ENCODE measurements at regions of chr19 and their contacts with region 1.

Region 1: GRCh38 chr19:40702337-40703012 is 12.0 kb upstream of the NUMBL start:
- DNase-seq: peak; percentile 82 to 84
- ATAC-seq: peak; percentile 88 to 96
- H3K4me3 ChIP-seq: no peak overlapping the region
- H3K27ac ChIP-seq: peak overlapping the region in 1 of 2 experiments; percentile 44; a peak in 3 of 6 replicates
- H3K4me1 ChIP-seq: peaks cover 8% of the 10 kb centered on the region; the same call in 2 of the 3 replicates
- CTCF ChIP-seq: peak; percentile 69
- EP300 ChIP-seq: no peak
- POLR2A ChIP-seq: no peak
- RAD21 ChIP-seq: peak; percentile 71 to 83

Region 2: GRCh38 chr19:40682431-40682964 is 20.0 kb before region 1 on chr19:
- CTCF ChIA-PET with region 1: interaction called, 16 read pairs
- POLR2A ChIA-PET with region 1: no interaction called
- DNase-seq: no peak
- ATAC-seq: no peak
- H3K4me3 ChIP-seq: no peak overlapping the region
- H3K27ac ChIP-seq: no peak overlapping the region
- H3K4me1 ChIP-seq: peaks cover 2% of the 10 kb centered on the region; the same call in 1 of the 3 replicates
- CTCF ChIP-seq: no peak
- EP300 ChIP-seq: no peak
- POLR2A ChIP-seq: no peak
- RAD21 ChIP-seq: no peak

Region 3: GRCh38 chr19:40716655-40717324 is 14.3 kb after region 1 on chr19 and contains the starts of genes COQ8B and ITPKC:
- CTCF ChIA-PET with region 1: interaction called, 22 read pairs
- POLR2A ChIA-PET with region 1: interaction called, 5 read pairs
- DNase-seq: peak; percentile 99 to 100
- ATAC-seq: peak; percentile 45 to 61
- H3K4me3 ChIP-seq: peak within 1 kb of the TSS; percentile 64
- H3K27ac ChIP-seq: peak within 1 kb of the TSS; percentile 88 to 93
- H3K4me1 ChIP-seq: peaks cover 34% of the 10 kb centered on the region
- CTCF ChIP-seq: no peak
- EP300 ChIP-seq: no peak; a peak in 1 of 5 replicates
- POLR2A ChIP-seq: peak; percentile 60
- RAD21 ChIP-seq: peak in 1 of 2 experiments; percentile 14; a peak in 2 of 5 replicates
- polyA plus RNA-seq, gene COQ8B: 43.9 and 47.2 TPM in 2 replicates
- polyA plus RNA-seq, gene ITPKC: 6.5 and 8.7 TPM in 2 replicates

Region 4: GRCh38 chr19:40735003-40735771 is 32.7 kb after region 1 on chr19:
- CTCF ChIA-PET with region 1: interaction called, 10 read pairs
- POLR2A ChIA-PET with region 1: no interaction called
- DNase-seq: peak in 1 of 2 experiments; percentile 57
- ATAC-seq: no peak
- H3K4me3 ChIP-seq: no peak overlapping the region
- H3K27ac ChIP-seq: no peak overlapping the region
- H3K4me1 ChIP-seq: no peaks in the 10 kb centered on the region
- CTCF ChIP-seq: no peak
- EP300 ChIP-seq: no peak
- POLR2A ChIP-seq: no peak
- RAD21 ChIP-seq: no peak

Region 5: GRCh38 chr19:40862785-40863184 is 160.3 kb after region 1 on chr19:
- CTCF ChIA-PET with region 1: no interaction called
- POLR2A ChIA-PET with region 1: no interaction called
- DNase-seq: peak in 1 of 2 experiments; percentile 56
- ATAC-seq: peak in 1 of 2 experiments; percentile 45; a peak in 5 of 6 replicates
- H3K4me3 ChIP-seq: no peak overlapping the region
- H3K27ac ChIP-seq: peak overlapping the region in 1 of 2 experiments; percentile 4; a peak in 1 of 6 replicates
- H3K4me1 ChIP-seq: peaks cover 18% of the 10 kb centered on the region
- CTCF ChIP-seq: no peak
- EP300 ChIP-seq: no peak
- POLR2A ChIP-seq: no peak
- RAD21 ChIP-seq: no peak